ENCODE measurements at regions of chr7 and their contacts with region 1.

Region 1: DNA sequence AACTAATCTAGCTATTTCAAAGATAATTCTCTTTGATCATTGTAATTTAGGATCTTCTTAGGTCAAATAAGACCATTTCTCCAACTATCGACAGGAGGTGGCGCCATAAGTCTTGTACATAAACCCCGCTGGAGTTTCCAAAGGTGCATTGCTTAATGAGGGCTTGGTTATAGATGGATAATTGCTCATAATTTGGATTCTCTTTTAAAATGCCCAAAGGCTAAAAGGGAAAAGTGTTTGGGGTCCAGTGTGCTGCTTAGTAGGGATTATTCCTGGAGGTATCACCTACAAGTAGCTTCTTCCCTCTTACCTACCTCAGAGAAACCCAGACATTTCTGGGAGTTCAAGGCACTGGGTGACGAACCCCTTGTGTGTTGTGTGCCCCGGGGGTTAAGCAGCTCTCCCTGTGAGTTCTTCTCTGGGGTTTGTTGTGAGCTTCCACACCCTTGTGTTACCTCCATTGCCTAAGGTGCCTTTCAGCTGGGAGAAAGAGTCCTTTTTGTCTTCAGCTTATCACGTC is 75.2 kb downstream of the PAXIP1 start:
- DNase-seq: peak; percentile 76 to 77
- H3K4me3 ChIP-seq: peak overlapping the region; percentile 38
- H3K4me3 Mint-ChIP-seq: peak overlapping the region; percentile 87
- H3K27ac Mint-ChIP-seq: peak overlapping the region; percentile 70
- H3K4me1 ChIP-seq: no peaks in the 10 kb centered on the region
- H3K4me1 Mint-ChIP-seq: no peaks in the 10 kb centered on the region
- H3K27me3 ChIP-seq: no peaks in the 10 kb centered on the region
- H3K27me3 Mint-ChIP-seq: no peaks in the 10 kb centered on the region
- CTCF ChIP-seq: peak; percentile 61 to 79

Region 2: GRCh38 chr7:154892462-154892861 is 35.2 kb before region 1 on chr7:
- CTCF ChIA-PET with region 1: no interaction called
- POLR2A ChIA-PET with region 1: no interaction called
- intact Hi-C with region 1: no loop called
- DNase-seq: no peak
- H3K4me3 ChIP-seq: no peak overlapping the region
- H3K4me3 Mint-ChIP-seq: no peak overlapping the region
- H3K27ac Mint-ChIP-seq: no peak overlapping the region
- H3K4me1 ChIP-seq: no peaks in the 10 kb centered on the region
- H3K4me1 Mint-ChIP-seq: no peaks in the 10 kb centered on the region
- H3K27me3 ChIP-seq: no peaks in the 10 kb centered on the region
- H3K27me3 Mint-ChIP-seq: peaks cover 2% of the 10 kb centered on the region
- CTCF ChIP-seq: no peak

Region 3: DNA sequence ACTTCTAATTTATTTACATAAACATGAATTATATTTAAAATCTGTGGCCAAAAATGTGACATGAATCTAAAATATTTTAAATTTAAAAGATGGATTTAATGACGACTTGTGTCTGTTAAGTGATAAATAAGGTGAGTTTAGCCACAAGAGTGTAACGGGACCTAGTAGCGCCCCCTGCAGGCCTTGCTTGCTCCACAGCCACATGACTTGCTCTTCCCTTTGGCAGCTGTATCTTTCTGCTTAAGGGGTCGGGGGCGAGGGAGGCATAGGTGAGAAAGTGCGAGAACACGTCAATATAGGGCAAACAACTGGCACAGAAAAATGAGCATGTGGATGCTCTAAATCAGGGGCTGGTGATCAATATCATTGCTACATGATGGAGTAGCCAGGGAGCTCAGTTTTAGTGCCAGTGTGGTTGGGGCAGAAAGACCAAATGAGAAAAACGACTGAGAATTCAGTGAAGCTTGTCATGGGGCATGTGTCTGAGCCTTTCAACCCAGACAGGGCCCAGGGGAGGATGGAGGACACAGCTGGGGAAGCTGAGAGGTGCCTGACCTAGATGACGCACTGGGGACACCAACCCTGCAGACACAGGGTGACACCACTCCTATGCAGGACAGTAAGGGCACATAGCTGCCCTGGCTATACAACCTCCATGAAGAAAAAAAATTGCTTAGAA is 25.5 kb after region 1 on chr7:
- CTCF ChIA-PET with region 1: interaction called, 4 read pairs
- POLR2A ChIA-PET with region 1: no interaction called
- intact Hi-C with region 1: loop called (anchors 1 kb)
- DNase-seq: peak in 1 of 2 experiments; percentile 63
- H3K4me3 ChIP-seq: no peak overlapping the region
- H3K4me3 Mint-ChIP-seq: no peak overlapping the region
- H3K27ac Mint-ChIP-seq: no peak overlapping the region
- H3K4me1 ChIP-seq: no peaks in the 10 kb centered on the region
- H3K4me1 Mint-ChIP-seq: no peaks in the 10 kb centered on the region
- H3K27me3 ChIP-seq: no peaks in the 10 kb centered on the region
- H3K27me3 Mint-ChIP-seq: no peaks in the 10 kb centered on the region
- CTCF ChIP-seq: peak; percentile 54 to 56

Region 4: DNA sequence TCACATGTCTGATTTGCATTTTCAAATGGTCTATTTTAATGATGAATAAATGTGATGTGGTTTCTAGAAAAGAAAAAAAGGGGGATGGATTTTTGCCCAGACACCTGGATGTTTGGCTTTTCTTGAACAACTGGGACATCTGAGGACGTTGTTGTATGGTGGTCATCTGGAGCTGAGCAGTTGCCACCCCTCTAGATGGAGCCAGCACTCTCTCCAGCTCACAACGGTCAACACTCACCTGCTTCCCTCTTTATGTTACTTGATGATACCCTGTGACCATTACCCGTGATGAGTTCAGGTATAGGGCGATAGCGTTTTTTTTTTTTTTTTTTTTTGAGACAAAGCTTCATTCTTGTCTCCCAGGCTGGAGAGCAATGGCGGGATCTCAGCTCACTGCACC is 105.3 kb after region 1 on chr7:
- CTCF ChIA-PET with region 1: no interaction called
- POLR2A ChIA-PET with region 1: no interaction called
- intact Hi-C with region 1: no loop called
- DNase-seq: no peak
- H3K4me3 ChIP-seq: no peak overlapping the region
- H3K4me3 Mint-ChIP-seq: no peak overlapping the region
- H3K27ac Mint-ChIP-seq: no peak overlapping the region
- H3K4me1 ChIP-seq: no peaks in the 10 kb centered on the region
- H3K4me1 Mint-ChIP-seq: no peaks in the 10 kb centered on the region
- H3K27me3 ChIP-seq: no peaks in the 10 kb centered on the region
- H3K27me3 Mint-ChIP-seq: peaks cover 9% of the 10 kb centered on the region
- CTCF ChIP-seq: peak in 1 of 2 experiments; percentile 14

Region 5: GRCh38 chr7:155190688-155191087 is 263.0 kb after region 1 on chr7:
- CTCF ChIA-PET with region 1: no interaction called
- POLR2A ChIA-PET with region 1: no interaction called
- intact Hi-C with region 1: loop called (anchors 1 kb)
- DNase-seq: peak in 1 of 2 experiments; percentile 82
- H3K4me3 ChIP-seq: no peak overlapping the region
- H3K4me3 Mint-ChIP-seq: peak overlapping the region; percentile 33
- H3K27ac Mint-ChIP-seq: no peak overlapping the region
- H3K4me1 ChIP-seq: no peaks in the 10 kb centered on the region
- H3K4me1 Mint-ChIP-seq: no peaks in the 10 kb centered on the region
- H3K27me3 ChIP-seq: no peaks in the 10 kb centered on the region
- H3K27me3 Mint-ChIP-seq: peaks cover 3% of the 10 kb centered on the region
- CTCF ChIP-seq: peak; percentile 86 to 95

Region 6: GRCh38 chr7:155344600-155345433 is 417.1 kb after region 1 on chr7:
- CTCF ChIA-PET with region 1: interaction called, 3 read pairs
- POLR2A ChIA-PET with region 1: no interaction called
- intact Hi-C with region 1: loop called (anchors 1 kb)
- DNase-seq: peak; percentile 81 to 88
- H3K4me3 ChIP-seq: peak overlapping the region; percentile 41
- H3K4me3 Mint-ChIP-seq: peak overlapping the region; percentile 58
- H3K27ac Mint-ChIP-seq: no peak overlapping the region
- H3K4me1 ChIP-seq: no peaks in the 10 kb centered on the region
- H3K4me1 Mint-ChIP-seq: peaks cover 6% of the 10 kb centered on the region
- H3K27me3 ChIP-seq: no peaks in the 10 kb centered on the region
- H3K27me3 Mint-ChIP-seq: no peaks in the 10 kb centered on the region
- CTCF ChIP-seq: peak; percentile 64 to 90

Measured in Caco-2 (cell line).